ENCODE measurements at regions of chr13 and their contacts with region 1.

Region 1: DNA sequence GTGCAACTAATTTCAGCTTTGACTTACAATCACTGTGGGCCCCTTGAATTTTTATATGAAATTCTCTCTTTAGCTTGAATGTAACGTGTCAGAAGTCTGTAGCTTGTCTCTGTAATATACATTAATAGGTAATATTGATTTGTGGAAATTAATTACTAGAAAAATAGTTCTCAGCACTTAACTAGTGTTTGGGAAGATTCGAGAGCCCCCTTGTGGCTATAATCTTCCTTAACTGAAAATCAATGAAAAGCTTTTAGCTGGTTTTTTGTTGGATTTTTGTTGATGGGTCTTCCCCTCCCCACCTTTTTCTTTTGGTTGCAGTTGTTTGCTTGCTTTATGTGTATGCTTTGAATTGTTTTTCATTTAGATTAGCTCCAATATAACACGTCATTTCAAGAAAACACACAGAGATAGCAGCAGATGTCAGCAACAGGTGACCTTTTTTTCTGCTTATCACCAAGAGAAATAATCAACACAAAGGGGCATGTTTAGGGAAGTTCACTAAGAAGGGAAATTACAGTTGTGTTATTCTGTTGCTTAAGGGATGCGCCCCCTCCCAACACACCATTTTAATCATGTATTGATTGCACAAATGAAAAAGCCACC is 176.8 kb downstream of the OXGR1 start:
- DNase-seq: no peak
- ATAC-seq: no peak
- H3K4me3 Mint-ChIP-seq: no peak overlapping the region
- H3K27ac Mint-ChIP-seq: no peak overlapping the region
- H3K4me1 Mint-ChIP-seq: no peaks in the 10 kb centered on the region
- H3K27me3 Mint-ChIP-seq: no peaks in the 10 kb centered on the region

Region 2: DNA sequence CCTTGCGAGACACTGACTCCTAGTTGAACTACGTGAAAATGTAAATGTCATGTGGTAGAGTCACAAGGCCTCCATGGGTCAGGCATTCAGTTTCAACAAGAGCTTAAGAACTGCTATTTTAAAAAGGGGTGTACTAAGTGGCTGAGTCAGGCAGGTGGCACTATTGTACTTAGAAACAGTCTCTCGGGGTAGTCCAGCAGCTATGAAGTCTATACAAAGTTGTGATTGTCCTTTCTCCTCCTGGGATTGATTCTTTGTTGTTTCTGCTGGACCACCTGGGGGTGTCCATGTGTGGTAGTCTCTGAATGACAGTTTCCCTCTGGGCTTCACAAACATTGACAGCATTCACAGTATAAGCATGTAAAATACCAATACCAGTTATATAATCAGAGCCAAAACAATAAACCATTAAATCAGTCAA is 797.3 kb before region 1 on chr13:
- CTCF ChIA-PET with region 1: interaction called, 13 read pairs
- POLR2A ChIA-PET with region 1: no interaction called
- DNase-seq: peak; percentile 25
- ATAC-seq: no peak
- H3K4me3 Mint-ChIP-seq: no peak overlapping the region
- H3K27ac Mint-ChIP-seq: no peak overlapping the region
- H3K4me1 Mint-ChIP-seq: no peaks in the 10 kb centered on the region
- H3K27me3 Mint-ChIP-seq: no peaks in the 10 kb centered on the region

Region 3: GRCh38 chr13:96781141-96781540 is 36.3 kb before region 1 on chr13:
- CTCF ChIA-PET with region 1: no interaction called
- POLR2A ChIA-PET with region 1: no interaction called
- DNase-seq: no peak
- ATAC-seq: no peak
- H3K4me3 Mint-ChIP-seq: no peak overlapping the region
- H3K27ac Mint-ChIP-seq: no peak overlapping the region
- H3K4me1 Mint-ChIP-seq: no peaks in the 10 kb centered on the region
- H3K27me3 Mint-ChIP-seq: no peaks in the 10 kb centered on the region

Measured in activated CD8-positive, alpha-beta T cell treated with anti-CD3 and anti-CD28 coated beads, Interleukin-2, amount 10 ng/mL, durations not matched to agents 7 days and 5 days (primary cell).